Motor neuron (in vitro differentiated cells): ENCODE measurements at regions of chr5 and their contacts with region 1.

Region 1: DNA sequence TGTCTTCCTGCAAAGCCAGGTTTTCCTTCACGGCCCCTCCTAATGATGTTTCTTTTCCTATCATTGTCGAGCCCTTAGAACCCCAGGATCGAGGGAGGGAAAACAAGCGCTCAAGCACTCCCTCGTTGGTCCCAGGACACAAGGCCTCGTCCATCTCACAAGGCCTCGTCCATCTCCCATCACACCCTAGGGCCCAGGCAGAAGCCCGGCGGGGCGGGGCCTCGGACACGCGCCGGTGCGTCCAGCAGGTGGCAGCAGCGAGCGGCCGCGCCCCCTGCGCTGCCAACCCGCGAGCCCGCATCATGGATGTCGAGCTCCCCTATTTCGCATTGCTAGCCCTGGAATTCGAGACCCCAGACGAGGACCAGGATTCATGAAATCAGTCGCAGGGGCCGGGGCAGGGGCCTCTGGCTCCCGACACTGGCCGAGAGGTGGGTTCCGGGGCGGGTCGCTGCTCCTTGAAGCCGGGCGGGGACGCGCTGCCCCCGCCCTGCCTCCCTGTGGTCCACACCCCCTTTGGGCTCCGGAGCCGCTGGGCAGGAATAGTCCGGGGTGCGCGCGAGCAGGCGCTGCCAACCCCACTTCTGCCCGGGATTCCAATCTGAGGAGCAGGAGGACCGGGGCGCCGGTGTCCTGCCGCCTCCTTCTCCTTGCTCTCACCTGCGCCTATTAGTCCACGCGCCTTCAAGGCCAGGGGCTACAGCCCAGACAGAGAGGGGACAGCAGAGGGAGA is at the start of gene ABLIM3:
- ATAC-seq: peak; percentile 84 to 98 (median 90)
- H3K4me3 ChIP-seq: peak within 1 kb of the TSS; percentile 45 to 89 (median 64)
- H3K27ac ChIP-seq: no peak within 1 kb of the TSS
- H3K4me1 ChIP-seq: peaks cover 3 to 13% of the 10 kb centered on the region in 2 donors
- total RNA-seq, gene ABLIM3: 0.18 to 28.7 (median 4.3) TPM

Region 2: GRCh38 chr5:149228618-149229297 is 87.4 kb after region 1 on chr5:
- in situ Hi-C with region 1: loop called in 3 of 9 experiments (anchors 25 kb)
- ATAC-seq: peak in 4 of 8 experiments; percentile 48 to 100 (median 100)
- H3K4me3 ChIP-seq: no peak overlapping the region
- H3K27ac ChIP-seq: no peak overlapping the region
- H3K4me1 ChIP-seq: no peaks in the 10 kb centered on the region

Region 3: DNA sequence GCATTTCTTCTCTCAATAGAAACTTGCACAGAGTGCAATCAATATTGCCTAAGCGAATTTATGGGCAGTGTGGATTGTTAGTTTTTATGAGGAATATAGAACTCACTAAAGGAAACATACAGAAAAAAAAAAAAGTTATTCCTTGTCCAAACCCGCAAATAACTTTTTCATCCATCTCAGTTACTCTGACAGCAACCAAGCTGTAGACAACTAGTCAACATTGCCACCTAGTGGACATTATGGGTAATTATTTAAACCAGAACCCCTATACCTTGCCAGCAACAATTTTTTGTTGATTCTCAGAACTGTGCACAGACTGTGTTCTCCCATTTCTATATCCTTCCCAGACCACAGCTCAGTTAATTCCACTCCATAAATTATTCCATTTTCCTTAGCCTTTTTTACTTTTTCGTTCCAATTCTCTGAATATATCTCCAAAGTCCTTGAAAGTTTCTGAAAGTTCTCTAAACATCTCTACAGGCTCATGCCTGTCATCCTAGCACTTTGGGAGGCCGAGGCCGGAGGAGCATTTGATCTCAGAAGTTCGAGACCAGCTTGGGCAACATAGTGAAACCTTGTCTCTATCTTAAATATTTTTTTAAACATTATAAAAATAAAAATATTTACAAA is 127.7 kb after region 1 on chr5:
- in situ Hi-C with region 1: loop called in 2 of 9 experiments (anchors 25 kb)
- ATAC-seq: peak in 2 of 8 experiments; percentile 3
- H3K4me3 ChIP-seq: no peak overlapping the region
- H3K27ac ChIP-seq: no peak overlapping the region
- H3K4me1 ChIP-seq: peaks cover 5 to 6% of the 10 kb centered on the region in 2 donors